ENCODE measurements at regions of chr22 and their contacts with region 1.

Region 1: DNA sequence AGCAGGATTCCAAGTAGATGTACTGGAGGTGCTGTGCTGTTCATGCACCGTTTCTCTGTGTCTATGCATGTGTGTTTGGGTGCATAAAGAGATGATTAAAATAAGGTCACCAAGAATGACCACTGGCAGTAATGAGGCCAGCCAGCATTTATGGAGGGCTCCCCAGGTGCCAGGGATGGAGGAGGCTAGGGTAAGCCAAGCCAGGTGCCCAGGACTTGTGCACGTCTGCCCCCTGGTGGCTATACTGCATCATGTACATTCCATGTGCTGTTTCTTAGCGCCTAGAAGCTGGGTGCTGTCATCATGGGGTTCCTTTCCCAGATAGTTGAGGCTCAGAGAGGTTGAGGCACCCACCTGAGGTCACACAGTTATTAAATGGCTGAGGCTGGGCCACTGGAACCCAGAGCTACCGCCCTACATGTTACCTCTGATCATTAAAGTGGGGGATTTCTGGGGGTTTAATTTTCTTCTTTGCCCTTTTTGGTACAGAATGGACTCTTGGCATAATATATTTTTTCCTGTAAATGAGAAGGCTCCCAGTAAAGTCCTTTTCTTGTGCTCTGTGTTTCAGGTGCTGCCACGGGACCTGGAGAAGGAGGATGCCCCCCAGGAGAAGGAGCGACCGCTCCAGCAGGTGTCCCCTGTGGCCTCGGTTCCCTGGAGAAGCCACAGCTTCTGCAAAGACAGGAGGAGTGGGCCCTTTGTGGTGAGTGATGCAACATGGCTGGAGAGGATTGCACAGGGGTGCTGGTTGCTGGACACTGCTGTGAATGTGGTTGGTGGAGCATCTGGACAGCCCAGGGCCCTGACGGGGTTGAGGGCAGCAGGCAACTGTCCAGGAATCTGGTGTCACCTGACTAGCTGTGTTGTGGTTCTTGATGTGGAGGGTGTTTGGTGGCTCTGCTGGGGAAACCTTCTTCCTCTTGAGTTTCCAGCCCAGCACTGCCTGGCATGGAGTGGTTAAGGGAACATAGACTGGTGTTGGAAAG is 96.4 kb downstream of the KIAA1671 start:
- DNase-seq: peak; percentile 23
- ATAC-seq: peak; percentile 91
- H3K4me3 ChIP-seq: no peak overlapping the region
- H3K27ac ChIP-seq: no peak overlapping the region
- H3K4me1 ChIP-seq: no peaks in the 10 kb centered on the region
- H3K27me3 ChIP-seq: no peaks in the 10 kb centered on the region
- CTCF ChIP-seq: peak; percentile 68
- POLR2A ChIP-seq: no peak
- RAD21 ChIP-seq: peak; percentile 74

Region 2: GRCh38 chr22:24938741-24939341 is 110.1 kb before region 1 on chr22:
- CTCF ChIA-PET with region 1: interaction called, 3 read pairs
- POLR2A ChIA-PET with region 1: no interaction called
- dilution Hi-C with region 1: no loop called
- in situ Hi-C with region 1: loop called (anchors 10 kb)
- intact Hi-C with region 1: loop called (anchors 1 kb)
- DNase-seq: peak; percentile 25
- ATAC-seq: peak; percentile 57
- H3K4me3 ChIP-seq: no peak overlapping the region
- H3K27ac ChIP-seq: no peak overlapping the region
- H3K4me1 ChIP-seq: no peaks in the 10 kb centered on the region
- H3K27me3 ChIP-seq: no peaks in the 10 kb centered on the region
- CTCF ChIP-seq: peak; percentile 58
- POLR2A ChIP-seq: no peak
- RAD21 ChIP-seq: peak; percentile 46

Region 3: DNA sequence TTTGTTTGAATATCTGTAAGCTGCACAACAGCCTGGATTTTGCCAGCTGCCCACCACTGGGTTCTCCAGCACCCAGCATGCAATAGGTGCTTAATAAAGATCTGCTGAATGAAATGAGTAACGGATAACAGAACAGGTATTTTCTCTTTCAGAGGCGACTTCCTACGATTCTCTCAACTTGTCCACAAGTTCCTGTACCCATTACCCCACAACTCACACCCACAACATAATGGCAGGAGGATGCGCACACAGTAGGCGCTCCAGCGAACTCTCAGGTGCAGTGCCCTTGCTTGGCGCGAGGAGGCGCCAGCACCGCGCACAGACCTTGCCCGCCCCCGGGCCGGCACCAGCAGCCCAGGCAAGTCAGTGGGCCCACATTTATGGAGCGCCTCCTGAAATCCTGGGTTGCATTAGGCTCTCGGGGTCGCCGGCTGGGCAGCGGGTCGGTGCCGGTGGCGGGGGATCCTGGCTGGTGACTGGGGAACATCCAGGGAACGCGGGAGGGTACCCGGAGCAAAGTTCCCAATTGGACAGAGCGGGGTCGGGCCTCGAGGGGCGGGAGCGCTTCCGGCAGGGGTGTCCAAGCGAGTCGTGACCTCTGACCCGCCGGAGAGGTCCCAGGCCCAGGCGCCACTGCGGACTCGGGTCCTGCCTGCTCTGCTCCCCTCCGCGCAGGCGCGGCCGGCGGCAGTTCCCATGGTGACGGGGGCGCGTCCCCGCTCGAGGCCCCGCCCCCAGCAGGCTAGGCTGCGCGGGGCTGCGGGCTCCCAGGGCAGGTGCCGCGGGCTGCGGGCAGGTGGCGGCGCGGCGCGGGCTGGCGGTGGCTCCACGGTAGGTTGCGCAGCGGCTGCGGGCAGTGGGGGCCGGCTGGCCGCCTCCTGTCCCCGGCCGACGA is 96.8 kb before region 1 on chr22 and contains the start of gene KIAA1671:
- CTCF ChIA-PET with region 1: no interaction called
- POLR2A ChIA-PET with region 1: no interaction called
- dilution Hi-C with region 1: no loop called
- in situ Hi-C with region 1: loop called (anchors 10 kb)
- intact Hi-C with region 1: loop called (anchors 1 kb)
- DNase-seq: peak; percentile 27
- ATAC-seq: peak; percentile 99
- H3K4me3 ChIP-seq: peak within 1 kb of the TSS; percentile 39
- H3K27ac ChIP-seq: no peak within 1 kb of the TSS
- H3K4me1 ChIP-seq: no peaks in the 10 kb centered on the region
- H3K27me3 ChIP-seq: peaks cover 21% of the 10 kb centered on the region
- CTCF ChIP-seq: peak; percentile 56
- POLR2A ChIP-seq: no peak
- RAD21 ChIP-seq: peak; percentile 50
- total RNA-seq, gene KIAA1671: under 0.01 TPM in 1 of 2 replicates, not detected in the other

Region 4: DNA sequence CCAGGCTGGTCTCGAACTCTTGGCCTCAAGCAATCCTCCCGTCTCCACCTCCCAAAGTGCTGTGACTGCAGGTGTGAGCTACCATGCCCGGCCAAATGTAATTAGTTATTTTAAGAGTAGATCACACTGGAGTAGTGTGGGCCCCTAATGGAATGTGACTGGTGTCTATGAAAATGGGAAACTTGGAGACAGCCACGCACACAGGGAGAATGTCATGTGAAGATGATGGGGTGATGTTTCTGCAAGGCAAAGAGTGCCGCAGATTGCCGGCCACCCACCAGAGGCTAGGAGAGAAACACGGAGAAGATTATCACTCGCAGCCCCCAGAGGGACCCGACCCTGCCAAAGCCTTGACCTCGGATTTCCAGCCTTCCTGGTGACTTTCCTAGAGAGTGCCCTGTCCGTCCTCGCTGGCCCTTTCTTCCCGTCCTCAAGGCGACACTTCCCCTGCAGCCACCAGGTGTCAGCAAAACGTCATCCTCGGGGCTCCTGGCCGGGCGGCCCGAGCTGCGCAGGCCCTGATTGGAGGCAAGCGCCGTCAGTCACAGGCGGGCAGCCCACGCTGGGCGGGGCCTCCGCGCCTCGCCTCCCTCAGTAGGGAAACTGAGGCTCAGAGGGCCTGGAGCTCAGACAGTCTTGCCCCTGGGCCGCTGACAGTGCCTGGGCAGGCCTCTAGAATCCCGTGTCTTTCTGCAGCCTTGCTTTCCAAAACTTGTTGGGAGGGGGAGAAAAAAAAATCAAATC is 186.8 kb after region 1 on chr22:
- CTCF ChIA-PET with region 1: no interaction called
- POLR2A ChIA-PET with region 1: no interaction called
- dilution Hi-C with region 1: no loop called
- in situ Hi-C with region 1: no loop called
- intact Hi-C with region 1: no loop called
- DNase-seq: peak; percentile 61
- ATAC-seq: peak; percentile 96
- H3K4me3 ChIP-seq: no peak overlapping the region
- H3K27ac ChIP-seq: no peak overlapping the region
- H3K4me1 ChIP-seq: no peaks in the 10 kb centered on the region
- H3K27me3 ChIP-seq: no peaks in the 10 kb centered on the region
- CTCF ChIP-seq: peak; percentile 55
- POLR2A ChIP-seq: no peak
- RAD21 ChIP-seq: peak; percentile 53

Region 5: DNA sequence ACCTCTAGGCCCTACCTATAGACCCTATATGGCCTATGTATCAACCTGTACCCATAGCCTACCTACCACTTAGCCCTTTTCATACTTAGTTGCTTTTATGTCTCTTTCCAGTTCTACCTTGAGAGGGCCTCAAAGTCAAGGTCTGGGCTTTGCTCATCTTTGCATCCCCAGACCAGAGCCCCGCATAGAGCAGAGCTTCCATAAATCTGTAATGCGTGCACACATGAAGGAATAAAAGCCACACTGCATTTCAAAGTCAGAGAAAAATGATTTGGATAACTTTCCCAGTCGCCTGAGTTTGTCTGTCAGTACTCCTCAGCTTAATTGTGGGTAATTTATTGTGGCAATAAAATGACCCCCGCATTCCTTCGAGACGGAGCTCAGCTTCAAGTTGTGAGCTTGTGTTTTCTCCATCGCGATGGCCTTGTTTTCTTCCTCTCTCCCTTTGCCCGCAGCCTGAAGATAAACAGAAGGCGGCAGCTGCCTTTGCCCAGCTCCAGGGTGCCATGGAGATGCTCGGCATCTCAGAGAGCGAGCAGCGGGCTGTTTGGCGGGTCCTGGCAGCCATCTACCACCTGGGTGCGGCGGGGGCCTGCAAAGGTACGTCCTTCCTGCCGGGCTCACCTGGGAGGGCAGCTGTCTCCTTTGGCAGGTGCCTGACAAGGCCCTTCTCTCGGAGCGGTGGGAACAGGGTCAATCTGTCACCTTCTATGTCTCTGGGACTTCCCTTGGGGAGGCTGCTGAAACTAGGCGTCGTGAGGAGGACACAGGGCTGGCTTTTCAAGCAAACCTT is 748.7 kb after region 1 on chr22:
- CTCF ChIA-PET with region 1: no interaction called
- POLR2A ChIA-PET with region 1: no interaction called
- dilution Hi-C with region 1: no loop called
- in situ Hi-C with region 1: no loop called
- intact Hi-C with region 1: no loop called
- DNase-seq: no peak
- ATAC-seq: no peak
- H3K4me3 ChIP-seq: no peak overlapping the region
- H3K27ac ChIP-seq: no peak overlapping the region
- H3K4me1 ChIP-seq: no peaks in the 10 kb centered on the region
- H3K27me3 ChIP-seq: no peaks in the 10 kb centered on the region; the same call in 1 of the 2 replicates
- CTCF ChIP-seq: no peak
- POLR2A ChIP-seq: no peak
- RAD21 ChIP-seq: no peak